Heart right ventricle (tissue), 16 donors: ENCODE measurements at regions of chr22 and their contacts with region 1.

Region 1: GRCh38 chr22:32775957-32776356 is 25.5 kb upstream of the TIMP3 start:
- DNase-seq: no peak
- ATAC-seq: peak in 1 of 8 donors; percentile 48
- H3K4me3 ChIP-seq: no peak overlapping the region
- H3K27ac ChIP-seq: no peak overlapping the region
- H3K4me1 ChIP-seq: peaks cover 0 to 6% (median 0%) of the 10 kb centered on the region in 9 donors
- H3K27me3 ChIP-seq: no peaks in the 10 kb centered on the region
- CTCF ChIP-seq: peak in 8 of 9 donors; percentile 16 to 50 (median 36)

Region 2: DNA sequence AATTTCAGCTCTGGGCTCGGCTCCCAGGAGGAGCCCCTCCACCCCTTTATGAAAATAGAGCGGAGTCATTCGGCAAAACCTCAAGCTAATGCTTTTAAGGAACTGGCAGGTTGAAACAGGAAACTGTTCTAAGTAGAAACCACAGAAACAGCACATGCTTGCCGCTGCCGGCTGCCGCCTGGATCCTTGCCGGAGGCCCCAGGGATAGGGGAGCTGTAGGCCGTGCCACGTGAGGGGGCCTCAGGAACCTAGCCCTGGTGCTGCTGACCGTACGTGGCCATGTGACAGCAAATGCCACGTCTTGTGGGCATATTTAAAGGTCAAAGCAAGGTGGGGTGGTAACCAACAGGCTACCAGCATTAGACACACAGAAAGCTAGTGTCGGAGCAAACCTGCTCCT is 52.3 kb before region 1 on chr22:
- intact Hi-C with region 1: loop called in 1 of 10 experiments (anchors 10 kb)
- DNase-seq: peak; percentile 66 to 70
- ATAC-seq: peak; percentile 58 to 86 (median 82)
- H3K4me3 ChIP-seq: no peak overlapping the region
- H3K27ac ChIP-seq: peak overlapping the region in 8 of 10 donors; percentile 42 to 78 (median 52)
- H3K4me1 ChIP-seq: peaks cover 9 to 38% (median 23%) of the 10 kb centered on the region in 9 donors
- H3K27me3 ChIP-seq: peaks cover 0 to 4% (median 0%) of the 10 kb centered on the region in 7 donors
- CTCF ChIP-seq: no peak